ENCODE measurements at regions of chr4 and their contacts with region 1.

Region 1: GRCh38 chr4:55948726-55949474 is at the start of gene CEP135:
- DNase-seq: peak; percentile 93
- H3K4me3 ChIP-seq: peak within 1 kb of the TSS; percentile 76 to 94 (median 83)
- H3K27ac ChIP-seq: peak within 1 kb of the TSS; percentile 92
- H3K4me1 ChIP-seq: peaks cover 22% of the 10 kb centered on the region
- H3K27me3 ChIP-seq: no peaks in the 10 kb centered on the region
- CTCF ChIP-seq: peak; percentile 64 to 94
- total RNA-seq, gene CEP135: 5.3 to 7.3 TPM

Region 2: DNA sequence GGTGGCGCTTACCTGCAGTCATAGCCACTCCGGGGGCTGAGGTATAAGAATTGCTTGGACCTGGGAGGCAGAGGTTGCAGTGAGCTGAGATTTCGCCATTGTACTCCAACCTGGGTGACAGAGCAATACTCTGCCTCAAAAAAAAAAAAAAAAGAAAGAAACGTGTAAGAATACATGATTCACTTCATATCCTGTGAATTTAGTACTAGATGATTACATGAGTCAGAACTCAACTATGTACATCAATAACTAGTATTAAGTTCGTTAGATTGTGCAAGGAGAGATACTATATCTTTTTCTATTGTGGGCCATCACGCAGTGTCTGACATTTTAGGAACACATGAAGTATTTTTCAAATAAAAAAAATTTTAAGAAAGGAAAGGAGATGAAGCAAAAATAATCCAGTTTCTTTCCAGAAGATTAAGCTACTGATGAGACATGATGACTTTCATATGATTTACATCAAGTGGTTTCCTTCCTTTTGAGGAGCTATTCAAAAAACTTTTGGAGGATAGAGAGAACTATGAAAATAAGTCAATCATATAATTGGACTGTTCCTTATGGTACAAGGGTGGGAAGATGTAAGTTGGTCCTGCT is 194.0 kb before region 1 on chr4:
- CTCF ChIA-PET with region 1: no interaction called
- dilution Hi-C with region 1: no loop called
- in situ Hi-C with region 1: no loop called
- intact Hi-C with region 1: no loop called
- DNase-seq: peak; percentile 72
- H3K4me3 ChIP-seq: no peak overlapping the region
- H3K27ac ChIP-seq: peak overlapping the region; percentile 11
- H3K4me1 ChIP-seq: peaks cover 22% of the 10 kb centered on the region
- H3K27me3 ChIP-seq: no peaks in the 10 kb centered on the region
- CTCF ChIP-seq: no peak

Region 3: GRCh38 chr4:55853484-55854046 is 95.3 kb before region 1 on chr4 and contains the start of gene EXOC1:
- CTCF ChIA-PET with region 1: no interaction called
- dilution Hi-C with region 1: no loop called
- in situ Hi-C with region 1: no loop called
- intact Hi-C with region 1: loop called (anchors 1 kb)
- DNase-seq: peak; percentile 93
- H3K4me3 ChIP-seq: peak within 1 kb of the TSS; percentile 72 to 95 (median 83)
- H3K27ac ChIP-seq: peak within 1 kb of the TSS; percentile 60
- H3K4me1 ChIP-seq: peaks cover 22% of the 10 kb centered on the region
- H3K27me3 ChIP-seq: no peaks in the 10 kb centered on the region
- CTCF ChIP-seq: no peak
- total RNA-seq, gene EXOC1: 33.2 to 37.3 TPM

Region 4: GRCh38 chr4:55906999-55907398 is 41.9 kb before region 1 on chr4:
- CTCF ChIA-PET with region 1: no interaction called
- dilution Hi-C with region 1: no loop called
- in situ Hi-C with region 1: no loop called
- intact Hi-C with region 1: loop called (anchors 5 kb)
- DNase-seq: peak; percentile 63
- H3K4me3 ChIP-seq: no peak overlapping the region
- H3K27ac ChIP-seq: peak overlapping the region; percentile 38
- H3K4me1 ChIP-seq: peaks cover 8% of the 10 kb centered on the region
- H3K27me3 ChIP-seq: no peaks in the 10 kb centered on the region
- CTCF ChIP-seq: no peak

Region 5: GRCh38 chr4:56048702-56049431 is 100.0 kb after region 1 on chr4:
- CTCF ChIA-PET with region 1: no interaction called
- dilution Hi-C with region 1: no loop called
- in situ Hi-C with region 1: no loop called
- intact Hi-C with region 1: loop called (anchors 2 kb)
- DNase-seq: peak; percentile 31
- H3K4me3 ChIP-seq: peak overlapping the region; percentile 47 to 53 (median 49)
- H3K27ac ChIP-seq: no peak overlapping the region
- H3K4me1 ChIP-seq: peaks cover 10% of the 10 kb centered on the region
- H3K27me3 ChIP-seq: peaks cover 8% of the 10 kb centered on the region
- CTCF ChIP-seq: peak in 1 of 2 donors; percentile 5

Region 6: DNA sequence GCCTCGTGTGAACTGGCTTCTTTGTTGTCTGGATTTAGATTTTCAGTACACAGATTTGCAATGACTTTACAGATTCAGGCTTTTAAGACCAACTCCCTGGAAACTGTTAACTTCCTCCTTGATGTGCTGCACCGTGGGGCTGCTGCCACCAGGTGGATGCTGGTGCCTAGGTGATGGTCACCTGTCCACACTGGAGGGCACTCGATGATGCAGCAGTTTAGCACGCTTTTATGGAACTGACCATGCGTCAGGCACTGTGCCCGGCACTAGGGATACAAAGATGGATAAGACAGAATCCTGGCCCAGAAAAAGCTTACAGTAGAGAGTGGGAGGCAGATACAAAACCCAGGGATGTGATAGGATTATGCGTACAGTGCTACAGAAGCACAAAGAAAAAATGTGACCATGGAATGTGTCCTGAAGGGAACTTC is 180.5 kb after region 1 on chr4:
- CTCF ChIA-PET with region 1: no interaction called
- dilution Hi-C with region 1: no loop called
- in situ Hi-C with region 1: no loop called
- intact Hi-C with region 1: loop called (anchors 1 kb)
- DNase-seq: peak; percentile 24
- H3K4me3 ChIP-seq: no peak overlapping the region
- H3K27ac ChIP-seq: no peak overlapping the region
- H3K4me1 ChIP-seq: no peaks in the 10 kb centered on the region
- H3K27me3 ChIP-seq: peaks cover 2% of the 10 kb centered on the region
- CTCF ChIP-seq: peak; percentile 67 to 72

Region 7: GRCh38 chr4:56301181-56302076 is 352.5 kb after region 1 on chr4:
- CTCF ChIA-PET with region 1: no interaction called
- dilution Hi-C with region 1: no loop called
- in situ Hi-C with region 1: loop called in 1 of 2 experiments (anchors 25 kb)
- intact Hi-C with region 1: loop called (anchors 1 kb)
- DNase-seq: peak; percentile 65
- H3K4me3 ChIP-seq: no peak overlapping the region
- H3K27ac ChIP-seq: no peak overlapping the region
- H3K4me1 ChIP-seq: no peaks in the 10 kb centered on the region
- H3K27me3 ChIP-seq: no peaks in the 10 kb centered on the region
- CTCF ChIP-seq: peak; percentile 95 to 99

Region 8: DNA sequence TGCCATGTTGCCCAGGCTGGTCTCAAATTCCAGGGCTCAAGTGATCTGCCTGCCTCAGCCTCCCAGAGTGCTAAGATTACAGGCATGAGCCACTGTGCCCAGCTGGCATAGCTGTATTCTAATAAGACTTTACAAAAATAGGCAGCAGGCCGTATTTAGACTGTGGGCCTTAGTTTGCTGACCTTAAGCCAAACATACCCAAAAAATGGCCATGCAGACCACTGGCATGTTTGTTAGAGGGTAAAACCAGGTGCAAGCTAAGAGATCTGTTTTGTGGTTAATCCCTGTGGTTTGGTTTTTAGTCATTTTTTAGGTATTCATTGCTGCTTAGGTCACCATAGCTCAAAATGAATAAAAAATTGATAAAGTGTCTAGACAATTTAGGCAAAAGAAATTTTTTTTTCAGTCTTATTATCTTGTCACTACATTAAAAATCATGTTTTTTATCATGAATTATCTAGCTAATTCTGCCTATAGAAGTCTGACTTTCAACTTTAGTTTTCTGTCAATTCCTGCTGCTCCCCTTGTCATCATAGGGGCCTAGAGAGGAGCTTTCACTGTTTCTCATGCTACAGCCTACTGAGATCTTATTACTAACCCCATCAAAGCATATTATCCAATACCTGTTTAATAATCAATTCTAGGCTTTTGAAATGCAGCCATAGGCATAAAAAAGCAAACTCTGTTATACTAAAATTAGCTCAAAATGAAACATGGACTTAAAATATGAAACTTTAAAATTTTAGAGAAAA is 880.1 kb after region 1 on chr4:
- CTCF ChIA-PET with region 1: no interaction called
- dilution Hi-C with region 1: no loop called
- in situ Hi-C with region 1: no loop called
- intact Hi-C with region 1: loop called (anchors 10 kb)
- DNase-seq: peak; percentile 51
- H3K4me3 ChIP-seq: no peak overlapping the region
- H3K27ac ChIP-seq: no peak overlapping the region
- H3K4me1 ChIP-seq: peaks cover 3% of the 10 kb centered on the region
- H3K27me3 ChIP-seq: no peaks in the 10 kb centered on the region
- CTCF ChIP-seq: no peak